Heart left ventricle (tissue), 16 donors: ENCODE measurements at regions of chr11 and their contacts with region 1.

Region 1: DNA sequence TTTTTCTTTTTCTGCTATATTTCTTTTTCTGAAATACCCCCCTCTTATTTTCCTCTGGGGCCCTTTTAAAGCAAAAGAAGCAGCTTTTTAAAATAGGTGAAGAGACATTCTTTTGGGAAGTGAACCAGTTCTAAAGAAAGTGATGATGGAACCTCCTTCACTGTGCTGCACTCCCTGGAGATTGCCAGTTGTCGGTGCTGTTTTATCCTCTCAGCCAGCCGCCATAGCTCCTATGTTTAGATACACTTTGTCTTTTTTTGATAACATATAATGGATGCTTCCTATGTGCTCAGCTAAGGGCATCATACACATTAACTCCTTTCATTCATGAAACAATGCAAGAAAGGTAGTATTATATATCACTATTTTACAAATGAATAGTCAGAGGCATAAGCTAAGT is 14.0 kb downstream of the CFAP300 start:
- DNase-seq: no peak
- ATAC-seq: peak in 3 of 4 donors; percentile 60 to 67 (median 65)
- H3K4me3 ChIP-seq: no peak overlapping the region
- H3K27ac ChIP-seq: no peak overlapping the region
- H3K4me1 ChIP-seq: no peaks in the 10 kb centered on the region
- H3K27me3 ChIP-seq: no peaks in the 10 kb centered on the region
- CTCF ChIP-seq: peak in 10 of 12 donors; percentile 15 to 56 (median 34)
- POLR2A ChIP-seq: no peak

Region 2: DNA sequence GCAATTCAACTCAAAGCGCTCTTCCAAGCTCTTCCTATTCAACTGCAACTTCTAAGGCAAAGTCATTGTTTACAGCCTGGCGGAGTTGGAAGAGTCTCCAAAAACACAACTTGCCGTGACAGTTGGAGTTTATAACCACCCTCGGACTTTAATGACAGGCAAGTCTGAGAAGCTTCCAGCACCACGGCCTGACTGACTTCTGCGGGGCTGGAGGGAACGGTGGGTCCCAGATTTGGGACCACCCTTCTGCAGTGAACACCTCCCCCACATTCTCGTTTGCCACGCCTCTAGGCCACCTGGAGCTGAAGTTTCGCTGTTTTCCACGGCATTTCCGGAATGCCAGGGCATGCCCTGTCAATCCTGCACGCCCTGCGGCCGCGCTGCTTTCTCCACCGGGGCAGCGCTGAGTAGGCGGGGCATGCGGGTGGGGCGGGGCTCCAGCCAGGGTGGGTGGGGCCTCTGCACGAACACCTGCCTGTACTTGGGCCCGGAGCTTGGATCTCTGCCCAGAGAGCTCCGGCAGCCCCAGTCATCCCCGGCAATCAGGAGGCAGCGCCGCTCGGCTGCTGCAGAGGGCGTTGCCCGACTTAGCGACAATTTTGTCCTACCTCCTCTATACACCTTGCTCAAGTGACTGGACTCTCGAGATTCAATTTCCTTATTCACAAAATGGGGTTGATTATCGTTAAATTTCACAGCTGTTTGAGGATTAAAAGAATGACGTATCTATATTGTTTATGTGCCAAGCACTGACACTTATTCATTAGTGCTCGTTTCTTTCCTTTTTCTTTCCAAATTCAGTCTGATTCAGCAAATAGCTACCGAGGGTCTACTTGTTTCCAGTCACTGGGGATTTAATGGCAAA is 207.3 kb after region 1 on chr11:
- intact Hi-C with region 1: loop called in 2 of 10 experiments (anchors 5 to 10 kb)
- DNase-seq: peak; percentile 68 to 84 (median 76)
- ATAC-seq: peak; percentile 83 to 98 (median 98)
- H3K4me3 ChIP-seq: peak overlapping the region; percentile 4 to 60 (median 49)
- H3K27ac ChIP-seq: peak overlapping the region in 3 of 12 donors; percentile 5 to 44 (median 24)
- H3K4me1 ChIP-seq: peaks cover 0 to 20% (median 9%) of the 10 kb centered on the region in 12 donors
- H3K27me3 ChIP-seq: peaks cover 0 to 32% (median 0%) of the 10 kb centered on the region in 9 donors
- CTCF ChIP-seq: peak; percentile 35 to 75 (median 51)
- POLR2A ChIP-seq: no peak

Region 3: GRCh38 chr11:102279641-102280170 is 218.4 kb after region 1 on chr11:
- intact Hi-C with region 1: loop called in 2 of 10 experiments (anchors 5 to 10 kb)
- DNase-seq: no peak
- ATAC-seq: peak in 1 of 4 donors; percentile 61
- H3K4me3 ChIP-seq: no peak overlapping the region
- H3K27ac ChIP-seq: peak overlapping the region in 1 of 12 donors; percentile 56
- H3K4me1 ChIP-seq: peaks cover 0 to 7% (median 1%) of the 10 kb centered on the region in 12 donors
- H3K27me3 ChIP-seq: no peaks in the 10 kb centered on the region
- CTCF ChIP-seq: peak in 3 of 12 donors; percentile 17 to 27 (median 24)
- POLR2A ChIP-seq: no peak

Region 4: GRCh38 chr11:102293873-102294601 is 232.8 kb after region 1 on chr11:
- intact Hi-C with region 1: no loop called
- DNase-seq: no peak
- ATAC-seq: peak in 3 of 4 donors; percentile 44 to 75 (median 44)
- H3K4me3 ChIP-seq: peak overlapping the region in 2 of 12 donors; percentile 7 to 41
- H3K27ac ChIP-seq: no peak overlapping the region
- H3K4me1 ChIP-seq: peaks cover 0 to 34% (median 0%) of the 10 kb centered on the region in 12 donors
- H3K27me3 ChIP-seq: no peaks in the 10 kb centered on the region
- CTCF ChIP-seq: peak; percentile 21 to 70 (median 58)
- POLR2A ChIP-seq: no peak